ENCODE measurements at regions of chrX and their contacts with region 1.

Region 1: GRCh38 chrX:119729408-119730201 is 28.8 kb upstream of the SOWAHD start:
- DNase-seq: peak; percentile 31
- ATAC-seq: peak; percentile 77
- H3K4me3 ChIP-seq: no peak overlapping the region
- H3K27ac ChIP-seq: no peak overlapping the region
- H3K4me1 ChIP-seq: no peaks in the 10 kb centered on the region
- H3K27me3 ChIP-seq: no peaks in the 10 kb centered on the region
- CTCF ChIP-seq: peak; percentile 61 to 85 (median 76)
- EP300 ChIP-seq: no peak
- POLR2A ChIP-seq: no peak
- RAD21 ChIP-seq: peak; percentile 89

Region 2: GRCh38 chrX:118780911-118781310 is 948.7 kb before region 1 on chrX:
- CTCF ChIA-PET with region 1: no interaction called
- POLR2A ChIA-PET with region 1: no interaction called
- RAD21 ChIA-PET with region 1: no interaction called
- SMC1A ChIA-PET with region 1: no interaction called
- in situ Hi-C with region 1: no loop called
- intact Hi-C with region 1: no loop called
- DNase-seq: no peak
- ATAC-seq: no peak
- H3K4me3 ChIP-seq: no peak overlapping the region
- H3K27ac ChIP-seq: no peak overlapping the region
- H3K4me1 ChIP-seq: no peaks in the 10 kb centered on the region
- H3K27me3 ChIP-seq: no peaks in the 10 kb centered on the region
- CTCF ChIP-seq: no peak
- EP300 ChIP-seq: no peak
- POLR2A ChIP-seq: no peak
- RAD21 ChIP-seq: no peak

Region 3: DNA sequence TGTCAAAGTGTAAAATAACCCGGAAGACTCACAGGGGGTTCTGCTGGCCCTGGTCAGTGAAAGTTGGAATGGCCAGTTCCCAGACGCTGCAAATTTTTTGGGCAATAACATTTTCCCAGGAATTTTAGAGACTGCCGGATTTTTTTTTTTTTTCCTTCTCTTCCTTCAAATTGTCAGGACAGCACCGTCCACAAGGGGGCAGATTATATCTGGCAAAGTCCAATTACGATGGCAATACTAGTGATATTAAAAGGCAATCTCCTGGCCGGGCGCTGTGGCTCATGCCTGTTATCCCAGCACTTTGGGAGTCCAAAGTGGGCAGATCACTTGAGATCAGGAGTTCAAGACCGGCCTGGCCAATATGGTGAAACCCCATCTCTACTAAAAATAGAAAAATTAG is 240.9 kb before region 1 on chrX:
- CTCF ChIA-PET with region 1: interaction called, 15 read pairs
- POLR2A ChIA-PET with region 1: no interaction called
- RAD21 ChIA-PET with region 1: interaction called, 3 read pairs
- SMC1A ChIA-PET with region 1: interaction called, 7 read pairs
- in situ Hi-C with region 1: no loop called
- intact Hi-C with region 1: loop called (anchors 1 kb)
- DNase-seq: no peak
- ATAC-seq: peak; percentile 64
- H3K4me3 ChIP-seq: no peak overlapping the region
- H3K27ac ChIP-seq: no peak overlapping the region
- H3K4me1 ChIP-seq: no peaks in the 10 kb centered on the region
- H3K27me3 ChIP-seq: no peaks in the 10 kb centered on the region
- CTCF ChIP-seq: peak; percentile 50 to 60 (median 58)
- EP300 ChIP-seq: no peak
- POLR2A ChIP-seq: no peak
- RAD21 ChIP-seq: peak; percentile 51; the same call in 1 of the 2 replicates

Region 4: DNA sequence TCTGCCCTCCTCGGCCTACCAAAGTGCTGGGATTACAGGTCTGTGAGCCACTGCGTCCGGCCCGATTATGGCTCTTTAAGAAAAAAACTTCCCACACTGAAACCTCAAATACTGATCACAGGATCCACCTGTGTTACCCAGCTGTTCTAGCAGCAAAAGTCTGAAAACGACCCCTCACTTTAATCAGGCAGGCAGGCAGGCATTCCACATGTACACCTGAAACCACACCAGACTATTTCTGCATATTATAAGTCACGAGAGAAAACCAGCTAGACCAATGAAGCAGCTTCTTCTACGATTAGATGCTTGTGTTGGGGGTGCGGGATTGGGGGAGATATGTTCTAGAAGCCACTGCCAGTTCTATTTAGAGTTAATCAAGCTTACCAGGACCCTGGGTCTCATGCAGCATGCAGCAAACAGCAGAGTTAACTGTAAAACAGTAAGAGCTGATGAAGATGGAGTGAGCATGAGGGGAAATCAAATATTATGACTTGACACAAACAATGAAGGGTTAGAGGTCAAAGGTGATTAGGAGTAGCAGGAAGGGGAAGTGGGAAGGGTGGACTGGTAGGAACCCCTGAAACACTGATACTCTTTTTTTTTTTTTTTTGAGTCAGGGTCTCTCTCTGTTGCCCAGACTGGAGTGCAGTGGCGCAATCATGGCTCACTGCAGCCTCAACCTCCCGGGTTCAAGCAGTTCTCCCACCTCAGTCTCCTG is 104.5 kb before region 1 on chrX:
- CTCF ChIA-PET with region 1: interaction called, 163 read pairs
- POLR2A ChIA-PET with region 1: interaction called, 5 read pairs
- RAD21 ChIA-PET with region 1: interaction called, 42 read pairs
- SMC1A ChIA-PET with region 1: interaction called, 166 read pairs
- in situ Hi-C with region 1: loop called (anchors 5 kb)
- intact Hi-C with region 1: loop called (anchors 2 kb)
- DNase-seq: no peak
- ATAC-seq: no peak
- H3K4me3 ChIP-seq: no peak overlapping the region
- H3K27ac ChIP-seq: no peak overlapping the region
- H3K4me1 ChIP-seq: peaks cover 7% of the 10 kb centered on the region
- H3K27me3 ChIP-seq: no peaks in the 10 kb centered on the region
- CTCF ChIP-seq: no peak
- EP300 ChIP-seq: no peak
- POLR2A ChIP-seq: no peak
- RAD21 ChIP-seq: no peak

Region 5: GRCh38 chrX:119661486-119661885 is 68.1 kb before region 1 on chrX:
- CTCF ChIA-PET with region 1: interaction called, 13 read pairs
- POLR2A ChIA-PET with region 1: interaction called, 3 read pairs
- RAD21 ChIA-PET with region 1: interaction called, 13 read pairs
- SMC1A ChIA-PET with region 1: interaction called, 7 read pairs
- in situ Hi-C with region 1: no loop called
- intact Hi-C with region 1: no loop called
- DNase-seq: no peak
- ATAC-seq: 0 out of 3 replicates have a peak, but pooled peaks have one; percentile 11
- H3K4me3 ChIP-seq: no peak overlapping the region
- H3K27ac ChIP-seq: no peak overlapping the region
- H3K4me1 ChIP-seq: peaks cover 20% of the 10 kb centered on the region
- H3K27me3 ChIP-seq: no peaks in the 10 kb centered on the region
- CTCF ChIP-seq: no peak
- EP300 ChIP-seq: no peak
- POLR2A ChIP-seq: no peak
- RAD21 ChIP-seq: no peak

Region 6: DNA sequence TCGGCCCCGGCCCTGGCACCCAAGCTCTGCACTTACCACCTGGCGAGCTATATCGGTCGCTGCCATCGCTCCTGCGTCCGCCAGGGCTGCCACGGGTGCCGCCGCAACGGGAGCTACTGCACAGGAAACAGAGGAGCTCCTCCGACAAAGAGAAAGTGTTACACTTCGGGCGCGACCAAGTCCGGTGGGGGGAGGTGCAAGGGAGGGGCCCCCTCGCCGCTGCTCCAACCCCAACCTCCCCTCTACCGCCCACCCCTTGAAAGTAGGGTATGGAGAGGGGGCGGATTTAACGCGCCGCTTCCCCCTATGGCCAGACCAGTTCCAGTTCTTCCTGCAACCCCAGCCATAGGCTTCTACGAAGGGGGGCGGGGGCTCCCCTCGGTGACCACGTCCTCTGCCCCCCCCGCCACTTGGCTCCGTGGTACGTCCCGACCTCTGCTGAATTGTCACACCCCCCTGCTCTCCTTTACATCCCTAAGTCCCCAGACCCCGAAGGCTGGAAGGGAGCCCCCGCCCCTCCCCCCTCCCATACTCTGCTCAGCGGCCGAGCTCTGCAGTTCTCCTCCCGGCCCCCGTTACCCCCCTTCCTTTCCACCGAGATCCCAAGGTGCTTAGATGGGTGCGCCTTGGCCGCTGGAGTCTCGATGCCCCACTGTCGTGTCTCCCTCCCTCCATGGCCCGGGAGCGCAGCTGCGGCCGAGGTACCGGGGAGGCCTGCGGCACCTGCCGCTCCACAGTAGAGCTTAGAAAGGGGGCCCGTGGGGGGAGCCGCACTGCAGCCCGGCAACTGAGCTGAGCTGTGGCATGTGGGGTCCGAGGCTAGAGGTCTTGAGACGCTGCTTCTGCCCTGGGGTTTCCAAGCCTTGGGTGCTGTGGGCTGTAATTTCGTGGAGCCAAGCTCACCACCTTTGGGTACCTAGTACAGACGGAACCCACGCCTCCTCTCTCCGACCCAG is 36.3 kb before region 1 on chrX and contains the start of gene SEPTIN6:
- CTCF ChIA-PET with region 1: interaction called, 33 read pairs
- POLR2A ChIA-PET with region 1: interaction called, 6 read pairs
- RAD21 ChIA-PET with region 1: interaction called, 50 read pairs
- SMC1A ChIA-PET with region 1: interaction called, 43 read pairs
- in situ Hi-C with region 1: no loop called
- intact Hi-C with region 1: loop called (anchors 2 kb)
- DNase-seq: no peak
- ATAC-seq: peak; percentile 71
- H3K4me3 ChIP-seq: peak within 1 kb of the TSS; percentile 82
- H3K27ac ChIP-seq: peak within 1 kb of the TSS; percentile 83
- H3K4me1 ChIP-seq: peaks cover 24% of the 10 kb centered on the region
- H3K27me3 ChIP-seq: no peaks in the 10 kb centered on the region
- CTCF ChIP-seq: no peak
- EP300 ChIP-seq: no peak
- POLR2A ChIP-seq: peak; percentile 98
- RAD21 ChIP-seq: no peak
- polyA plus RNA-seq, gene SEPTIN6: 37.2 to 48.4 TPM

Region 7: DNA sequence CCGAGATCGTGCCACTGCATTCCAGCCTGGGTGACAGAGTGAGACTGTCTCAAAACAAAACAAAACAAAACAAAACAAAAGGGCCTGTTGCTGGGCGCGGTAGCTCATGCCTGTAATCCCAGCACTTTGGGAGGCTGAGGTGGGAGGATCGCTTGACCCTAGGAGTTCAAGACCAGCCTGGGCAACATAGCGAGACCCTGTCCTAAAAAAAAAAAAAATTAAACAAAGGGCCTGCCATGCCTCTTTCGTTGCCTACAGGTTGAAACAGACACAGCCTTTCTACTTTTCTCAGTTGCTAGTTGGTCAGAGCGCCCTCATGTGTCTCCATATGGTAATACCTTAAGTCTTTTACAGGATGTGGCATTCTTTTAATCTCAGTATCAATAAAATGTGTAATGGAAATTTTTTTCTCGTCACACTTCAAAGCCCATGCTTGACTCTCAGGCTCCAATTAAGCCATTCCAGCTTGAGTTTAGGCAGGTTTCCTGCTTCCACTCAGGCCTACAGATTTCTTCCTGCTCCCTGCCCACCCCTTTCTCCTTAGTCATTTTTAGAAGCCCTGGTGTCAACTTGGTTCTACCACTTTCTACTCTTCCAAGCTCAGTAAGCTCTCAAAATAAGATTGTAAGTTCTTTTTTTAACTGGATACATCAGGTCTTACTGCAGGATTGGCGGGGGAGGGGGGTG is 24.1 kb after region 1 on chrX:
- CTCF ChIA-PET with region 1: interaction called, 78 read pairs
- POLR2A ChIA-PET with region 1: no interaction called
- RAD21 ChIA-PET with region 1: interaction called, 14 read pairs
- SMC1A ChIA-PET with region 1: interaction called, 42 read pairs
- in situ Hi-C with region 1: no loop called
- intact Hi-C with region 1: no loop called
- DNase-seq: no peak
- ATAC-seq: peak; percentile 8; the same call in 1 of the 3 replicates
- H3K4me3 ChIP-seq: no peak overlapping the region
- H3K27ac ChIP-seq: peak overlapping the region; percentile 67
- H3K4me1 ChIP-seq: peaks cover 32% of the 10 kb centered on the region
- H3K27me3 ChIP-seq: no peaks in the 10 kb centered on the region
- CTCF ChIP-seq: peak; percentile 53 to 66 (median 61)
- EP300 ChIP-seq: no peak
- POLR2A ChIP-seq: no peak
- RAD21 ChIP-seq: peak; percentile 68

Region 8: GRCh38 chrX:119791438-119792231 is 62.0 kb after region 1 on chrX and contains the start of gene RPL39:
- CTCF ChIA-PET with region 1: interaction called, 16 read pairs
- POLR2A ChIA-PET with region 1: no interaction called
- RAD21 ChIA-PET with region 1: interaction called, 4 read pairs
- SMC1A ChIA-PET with region 1: interaction called, 5 read pairs
- in situ Hi-C with region 1: no loop called
- intact Hi-C with region 1: no loop called
- DNase-seq: peak; percentile 51
- ATAC-seq: peak; percentile 90
- H3K4me3 ChIP-seq: peak within 1 kb of the TSS; percentile 76
- H3K27ac ChIP-seq: peak within 1 kb of the TSS; percentile 90
- H3K4me1 ChIP-seq: no peaks in the 10 kb centered on the region; the same call in 1 of the 2 replicates
- H3K27me3 ChIP-seq: no peaks in the 10 kb centered on the region
- CTCF ChIP-seq: no peak
- EP300 ChIP-seq: no peak
- POLR2A ChIP-seq: peak; percentile 96
- RAD21 ChIP-seq: no peak
- polyA plus RNA-seq, gene RPL39: 4,146 to 5,350 TPM